Mammary epithelial cell (primary cell): ENCODE measurements at regions of chr17 and their contacts with region 1.

Region 1: DNA sequence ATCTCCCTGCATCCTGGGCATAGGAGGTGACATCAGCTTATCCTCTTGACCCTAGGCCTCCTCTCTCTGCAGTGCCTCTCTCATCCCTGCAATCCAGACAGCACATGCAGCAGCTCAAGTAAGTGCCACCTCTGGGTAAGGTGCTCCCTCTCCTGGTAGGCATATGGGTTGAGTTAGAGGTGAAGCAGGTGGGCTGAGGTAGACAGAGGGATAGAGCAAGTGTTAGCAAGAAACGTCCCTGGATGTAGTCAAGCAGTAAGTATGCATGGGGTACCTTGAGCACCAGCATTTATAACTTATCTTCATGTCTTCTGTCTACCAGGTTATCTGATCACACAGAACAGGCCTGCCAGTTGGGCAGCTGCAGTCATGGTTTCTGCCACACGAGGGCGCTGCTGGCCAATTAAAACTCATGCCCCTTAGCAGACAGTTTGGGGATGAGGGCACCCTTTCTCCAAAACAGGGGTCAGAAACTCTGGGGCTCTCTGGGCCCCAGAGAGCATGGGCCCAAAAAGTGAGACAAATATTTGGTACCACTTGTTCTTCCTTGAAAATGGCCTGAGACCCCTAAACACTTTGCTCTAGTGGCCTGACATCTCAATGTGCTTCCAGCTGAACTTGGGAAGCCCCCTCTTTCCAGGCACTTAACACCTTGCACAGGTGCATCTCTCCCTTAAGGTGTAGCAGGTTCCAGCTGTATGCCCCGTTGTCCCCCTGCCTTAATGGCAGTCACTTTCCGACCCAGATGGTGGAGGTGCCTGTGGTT is 59.8 kb downstream of the NEUROD2 start:
- DNase-seq: peak; percentile 34
- H3K4me3 ChIP-seq: no peak overlapping the region
- H3K27ac ChIP-seq: no peak overlapping the region
- H3K4me1 ChIP-seq: no peaks in the 10 kb centered on the region
- H3K27me3 ChIP-seq: no peaks in the 10 kb centered on the region
- CTCF ChIP-seq: peak; percentile 89 to 96

Region 2: GRCh38 chr17:39270923-39271322 is 277.0 kb before region 1 on chr17:
- CTCF ChIA-PET with region 1: no interaction called
- dilution Hi-C with region 1: no loop called
- in situ Hi-C with region 1: no loop called
- intact Hi-C with region 1: loop called (anchors 10 kb)
- DNase-seq: peak; percentile 2
- H3K4me3 ChIP-seq: no peak overlapping the region
- H3K27ac ChIP-seq: no peak overlapping the region
- H3K4me1 ChIP-seq: no peaks in the 10 kb centered on the region
- H3K27me3 ChIP-seq: no peaks in the 10 kb centered on the region
- CTCF ChIP-seq: peak; percentile 19 to 24

Region 3: GRCh38 chr17:39863918-39864746 is 316.2 kb after region 1 on chr17 and contains the start of gene IKZF3:
- CTCF ChIA-PET with region 1: no interaction called
- dilution Hi-C with region 1: no loop called
- in situ Hi-C with region 1: no loop called
- intact Hi-C with region 1: loop called (anchors 1 kb)
- DNase-seq: peak; percentile 68
- H3K4me3 ChIP-seq: no peak within 1 kb of the TSS
- H3K27ac ChIP-seq: no peak within 1 kb of the TSS
- H3K4me1 ChIP-seq: peaks cover 6% of the 10 kb centered on the region
- H3K27me3 ChIP-seq: peaks cover 47% of the 10 kb centered on the region
- CTCF ChIP-seq: peak in 1 of 2 donors; percentile 43
- total RNA-seq, gene IKZF3: 0.02 TPM in 1 of 2 donors, not detected in the other